Psoas muscle (tissue), 8 donors: ENCODE measurements at regions of chr2 and their contacts with region 1.

Region 1: GRCh38 chr2:47516360-47517104 is 113.6 kb downstream of the MSH2 start:
- DNase-seq: no peak
- ATAC-seq: no peak
- H3K4me3 ChIP-seq: no peak overlapping the region
- H3K27ac ChIP-seq: no peak overlapping the region
- H3K4me1 ChIP-seq: peaks cover 3% of the 10 kb centered on the region
- H3K27me3 ChIP-seq: peaks cover 0 to 11% (median 2%) of the 10 kb centered on the region in 3 donors
- CTCF ChIP-seq: no peak

Region 2: DNA sequence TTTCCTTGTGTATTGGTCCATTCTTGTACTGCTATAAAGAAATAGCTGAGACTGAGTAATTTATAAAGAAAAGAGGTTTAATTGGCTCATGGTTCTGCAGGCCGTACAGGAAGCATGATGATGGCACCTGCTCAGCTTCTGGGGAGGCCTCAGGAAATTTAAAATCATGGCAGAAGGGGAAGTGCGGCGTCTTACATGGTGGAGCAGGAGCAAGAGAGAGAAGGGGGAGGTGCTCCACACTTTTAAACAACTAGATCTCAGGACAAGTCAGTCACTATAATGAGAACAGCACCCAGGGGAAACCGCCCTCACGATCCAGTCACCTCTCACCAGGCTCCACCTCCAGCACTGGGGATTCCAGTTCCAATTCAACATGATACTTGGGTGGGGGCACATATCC is 59.3 kb before region 1 on chr2:
- intact Hi-C with region 1: no loop called
- DNase-seq: no peak
- ATAC-seq: no peak
- H3K4me3 ChIP-seq: no peak overlapping the region
- H3K27ac ChIP-seq: no peak overlapping the region
- H3K4me1 ChIP-seq: no peaks in the 10 kb centered on the region
- H3K27me3 ChIP-seq: no peaks in the 10 kb centered on the region
- CTCF ChIP-seq: no peak

Region 3: GRCh38 chr2:47534179-47534919 is 17.8 kb after region 1 on chr2:
- intact Hi-C with region 1: loop called in 1 of 2 experiments (anchors 1 kb)
- DNase-seq: peak in 1 of 2 donors; percentile 43
- ATAC-seq: no peak
- H3K4me3 ChIP-seq: no peak overlapping the region
- H3K27ac ChIP-seq: no peak overlapping the region
- H3K4me1 ChIP-seq: no peaks in the 10 kb centered on the region
- H3K27me3 ChIP-seq: no peaks in the 10 kb centered on the region
- CTCF ChIP-seq: no peak